ENCODE measurements at regions of chr2 and their contacts with region 1.

Region 1: GRCh38 chr2:23617167-23617810 is 232.3 kb downstream of the KLHL29 start:
- DNase-seq: peak; percentile 97
- H3K4me3 ChIP-seq: peak overlapping the region in 3 of 4 donors; percentile 10 to 23 (median 12)
- H3K27ac ChIP-seq: peak overlapping the region; percentile 88 to 96 (median 93)
- H3K4me1 ChIP-seq: peaks cover 0 to 69% (median 60%) of the 10 kb centered on the region in 4 donors
- H3K27me3 ChIP-seq: no peaks in the 10 kb centered on the region
- CTCF ChIP-seq: peak; percentile 68 to 93 (median 82)
- EP300 ChIP-seq: peak; percentile 57 to 94 (median 78)
- POLR2A ChIP-seq: no peak

Region 2: DNA sequence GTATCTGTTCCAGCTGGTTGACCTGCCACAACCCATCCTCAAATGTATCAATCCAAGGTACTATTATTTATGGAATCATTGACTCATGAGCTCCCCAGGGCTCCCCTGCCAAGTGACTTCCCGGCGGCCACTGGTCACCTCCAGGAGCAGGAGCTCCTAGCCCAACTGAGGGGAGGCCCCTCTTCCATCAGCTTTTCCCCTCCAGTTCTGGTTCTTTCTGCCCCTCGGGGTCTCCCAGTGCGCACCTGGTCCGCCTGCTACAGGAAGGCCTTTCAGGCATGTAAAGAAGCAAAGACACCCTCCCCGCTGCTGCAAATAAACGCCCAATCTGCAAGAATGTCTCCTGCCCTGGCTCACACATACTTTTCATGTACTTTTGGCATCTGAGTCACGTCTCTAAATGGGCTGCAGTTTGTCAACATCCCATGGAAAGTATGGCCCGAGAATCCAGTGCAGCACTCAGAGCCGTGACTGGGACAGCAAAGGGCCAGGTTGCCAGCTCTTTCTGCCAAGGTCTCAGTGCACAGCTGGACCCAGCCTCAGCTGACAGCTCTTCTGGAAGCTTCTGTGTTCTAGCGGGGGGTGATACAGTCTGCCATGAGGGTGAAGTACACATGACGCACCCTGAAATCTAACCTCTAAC is 190.9 kb before region 1 on chr2:
- intact Hi-C with region 1: loop called (anchors 5 kb)
- DNase-seq: peak; percentile 92
- H3K4me3 ChIP-seq: no peak overlapping the region
- H3K27ac ChIP-seq: peak overlapping the region; percentile 77 to 89 (median 85)
- H3K4me1 ChIP-seq: peaks cover 0 to 86% (median 66%) of the 10 kb centered on the region in 4 donors
- H3K27me3 ChIP-seq: no peaks in the 10 kb centered on the region
- CTCF ChIP-seq: no peak
- EP300 ChIP-seq: peak in 3 of 4 donors; percentile 31 to 85 (median 67)
- POLR2A ChIP-seq: no peak

Region 3: GRCh38 chr2:23513872-23514793 is 103.2 kb before region 1 on chr2:
- intact Hi-C with region 1: loop called (anchors 2 kb)
- DNase-seq: peak; percentile 86
- H3K4me3 ChIP-seq: peak overlapping the region; percentile 15 to 35 (median 28)
- H3K27ac ChIP-seq: peak overlapping the region; percentile 69 to 85 (median 80)
- H3K4me1 ChIP-seq: peaks cover 0 to 51% (median 30%) of the 10 kb centered on the region in 4 donors
- H3K27me3 ChIP-seq: no peaks in the 10 kb centered on the region
- CTCF ChIP-seq: no peak
- EP300 ChIP-seq: peak; percentile 74 to 94 (median 77)
- POLR2A ChIP-seq: no peak

Region 4: DNA sequence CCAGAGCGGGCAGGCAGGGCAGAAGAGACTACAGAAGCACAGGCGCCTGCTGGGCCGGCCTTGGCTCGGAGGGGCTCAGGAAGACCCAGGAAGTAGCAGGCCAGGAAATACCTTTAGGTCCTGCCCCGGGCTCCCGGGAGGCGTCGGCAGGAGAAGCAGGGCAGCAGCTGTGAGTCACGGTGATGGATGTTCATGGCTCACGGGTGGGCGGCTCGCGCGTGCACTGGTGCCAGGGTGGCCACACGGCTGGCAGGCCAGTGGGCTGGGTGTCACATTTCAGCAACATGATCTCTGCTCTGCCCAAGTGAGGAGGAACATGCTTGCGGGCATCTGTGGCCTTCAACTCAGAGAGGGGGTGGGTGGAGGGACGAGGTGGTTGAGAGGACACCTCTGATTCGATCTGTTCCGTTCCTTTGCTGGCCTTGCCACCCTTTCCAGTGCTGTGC is 93.0 kb before region 1 on chr2:
- intact Hi-C with region 1: loop called (anchors 1 kb)
- DNase-seq: peak; percentile 84
- H3K4me3 ChIP-seq: no peak overlapping the region
- H3K27ac ChIP-seq: peak overlapping the region; percentile 87 to 93 (median 92)
- H3K4me1 ChIP-seq: peaks cover 0 to 69% (median 52%) of the 10 kb centered on the region in 4 donors
- H3K27me3 ChIP-seq: no peaks in the 10 kb centered on the region
- CTCF ChIP-seq: no peak
- EP300 ChIP-seq: no peak
- POLR2A ChIP-seq: no peak

Region 5: DNA sequence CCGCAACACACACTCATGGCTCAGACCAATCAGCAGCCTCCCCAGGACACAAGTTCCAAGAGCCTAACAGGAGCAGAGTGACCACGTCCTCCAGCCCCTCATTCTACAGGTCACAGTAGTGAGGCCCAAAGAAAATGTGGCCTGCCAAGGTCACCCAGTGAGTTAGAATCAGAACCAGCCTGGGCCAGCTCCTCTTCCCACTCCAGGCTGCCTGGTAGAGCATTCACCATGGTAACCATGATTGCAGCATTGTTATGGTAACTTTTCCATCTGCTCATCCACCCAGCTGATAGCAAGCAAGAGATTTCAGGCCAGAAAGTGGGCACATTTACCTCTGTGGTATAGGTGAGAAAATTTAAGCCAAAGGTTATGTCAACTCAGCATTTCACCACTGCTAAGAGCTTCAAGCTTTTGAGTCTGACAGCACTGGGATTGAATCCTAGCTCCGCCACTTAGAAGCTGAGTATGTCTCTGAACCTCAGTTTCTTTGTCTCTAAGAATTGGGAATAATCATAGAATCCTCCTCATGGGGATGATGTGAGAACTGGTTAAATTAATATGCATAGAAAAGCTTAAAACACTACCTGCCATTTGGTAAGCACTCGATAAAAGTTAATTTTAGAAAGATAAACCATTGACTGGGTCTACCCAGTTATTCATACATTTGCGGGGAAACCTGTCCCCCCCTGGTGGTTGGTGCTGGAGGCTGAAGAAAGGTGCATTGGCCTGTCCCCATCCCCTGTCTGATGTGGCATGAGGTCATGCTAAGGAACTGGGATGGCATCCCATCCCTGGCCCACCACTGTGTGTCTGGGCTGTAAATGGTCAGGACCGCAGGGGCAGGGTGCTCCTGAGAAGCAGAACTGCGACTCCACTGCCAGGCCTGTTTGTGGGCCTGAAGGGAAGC is 50.8 kb before region 1 on chr2:
- intact Hi-C with region 1: loop called (anchors 2 kb)
- DNase-seq: no peak
- H3K4me3 ChIP-seq: no peak overlapping the region
- H3K27ac ChIP-seq: peak overlapping the region; percentile 73 to 85 (median 76)
- H3K4me1 ChIP-seq: peaks cover 0 to 92% (median 78%) of the 10 kb centered on the region in 4 donors
- H3K27me3 ChIP-seq: no peaks in the 10 kb centered on the region
- CTCF ChIP-seq: peak in 2 of 4 experiments; percentile 35 to 45
- EP300 ChIP-seq: no peak
- POLR2A ChIP-seq: no peak